ENCODE measurements at regions of chr15 and their contacts with region 1.

Region 1: DNA sequence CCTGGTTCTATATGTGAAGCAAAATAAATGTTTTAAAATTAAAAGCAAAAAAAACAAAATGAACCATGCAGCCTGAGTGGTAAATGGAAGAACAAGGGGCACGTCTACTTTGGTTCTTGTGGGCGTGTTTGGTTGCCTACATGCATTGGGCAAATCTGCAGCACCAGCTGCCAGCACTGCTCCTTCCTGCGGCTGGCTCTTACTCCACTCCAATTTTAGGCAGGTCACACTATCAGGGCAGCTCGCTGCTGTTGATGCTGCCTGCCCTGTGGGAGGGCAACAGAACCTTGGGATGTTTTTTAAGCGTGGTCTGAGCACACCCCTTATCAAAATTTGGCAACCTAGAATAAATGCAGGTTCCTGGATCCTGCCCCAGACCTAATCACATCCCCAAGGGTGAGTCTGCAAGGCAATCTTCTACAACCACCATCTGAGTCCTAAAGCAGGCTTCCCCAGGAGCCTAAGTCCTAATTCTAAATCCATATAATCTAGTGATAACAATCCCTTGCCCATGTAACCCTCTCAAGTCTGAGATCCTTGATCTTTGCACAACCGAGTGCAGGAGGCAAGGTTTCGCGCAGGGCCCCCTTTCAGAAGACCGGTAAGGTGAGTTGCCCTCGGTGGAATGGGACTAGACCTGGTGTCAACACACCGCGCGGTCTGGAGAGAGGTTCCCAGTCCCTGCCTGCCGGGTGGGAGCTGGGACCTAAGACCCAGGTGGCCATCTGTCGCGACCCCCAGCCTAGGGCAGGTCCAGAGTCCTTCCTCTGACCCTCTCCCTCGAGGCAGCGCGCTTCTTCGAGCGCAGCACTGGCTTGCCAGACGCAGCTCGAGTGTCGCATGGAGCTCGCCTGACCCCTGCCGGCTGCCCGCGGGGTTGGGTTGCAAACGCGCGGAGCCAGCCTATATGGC is 15.9 kb downstream of the IVD start:
- DNase-seq: peak; percentile 60 to 87 (median 79)
- ATAC-seq: peak; percentile 98
- H3K4me3 ChIP-seq: no peak overlapping the region
- H3K4me3 Mint-ChIP-seq: no peak overlapping the region
- H3K27ac ChIP-seq: no peak overlapping the region
- H3K27ac Mint-ChIP-seq: no peak overlapping the region
- H3K4me1 ChIP-seq: peaks cover 7% of the 10 kb centered on the region
- H3K4me1 Mint-ChIP-seq: peaks cover 7% of the 10 kb centered on the region
- H3K27me3 ChIP-seq: no peaks in the 10 kb centered on the region
- H3K27me3 Mint-ChIP-seq: no peaks in the 10 kb centered on the region
- CTCF ChIP-seq: peak; percentile 96

Region 2: DNA sequence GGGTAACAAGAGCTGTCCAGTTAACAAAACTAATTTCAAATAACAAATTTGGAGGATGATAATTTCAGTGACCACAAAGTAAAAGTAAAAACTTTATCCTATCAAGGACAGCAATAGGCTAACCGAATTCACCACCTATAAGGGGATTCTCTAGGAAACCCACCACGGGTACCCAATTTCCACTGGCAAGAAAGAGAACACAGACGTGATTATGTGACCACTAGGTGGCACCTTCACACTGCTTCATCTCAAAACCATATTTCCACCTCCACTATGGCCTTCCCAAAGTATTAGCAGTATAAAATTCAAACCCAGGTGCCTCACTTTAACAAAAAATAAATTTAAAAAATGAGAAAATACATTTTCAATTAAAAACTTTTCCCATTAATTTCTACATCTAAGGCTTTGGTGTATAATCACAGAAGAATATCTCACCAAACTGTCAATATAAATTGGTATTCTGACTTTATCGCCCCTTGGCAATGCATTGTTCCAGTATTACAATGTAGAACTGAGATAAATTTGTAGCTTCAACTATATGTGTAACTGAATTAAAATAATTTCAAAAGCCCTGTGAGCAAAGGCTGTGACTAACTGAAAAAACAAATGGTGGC is 735.4 kb before region 1 on chr15:
- CTCF ChIA-PET with region 1: no interaction called
- POLR2A ChIA-PET with region 1: no interaction called
- intact Hi-C with region 1: loop called (anchors 5 to 10 kb)
- DNase-seq: peak in 9 of 14 experiments; percentile 3 to 70 (median 12)
- ATAC-seq: no peak
- H3K4me3 ChIP-seq: no peak overlapping the region
- H3K4me3 Mint-ChIP-seq: no peak overlapping the region
- H3K27ac ChIP-seq: no peak overlapping the region
- H3K27ac Mint-ChIP-seq: no peak overlapping the region
- H3K4me1 ChIP-seq: no peaks in the 10 kb centered on the region
- H3K4me1 Mint-ChIP-seq: no peaks in the 10 kb centered on the region
- H3K27me3 ChIP-seq: no peaks in the 10 kb centered on the region
- H3K27me3 Mint-ChIP-seq: no peaks in the 10 kb centered on the region
- CTCF ChIP-seq: peak; percentile 94

Region 3: DNA sequence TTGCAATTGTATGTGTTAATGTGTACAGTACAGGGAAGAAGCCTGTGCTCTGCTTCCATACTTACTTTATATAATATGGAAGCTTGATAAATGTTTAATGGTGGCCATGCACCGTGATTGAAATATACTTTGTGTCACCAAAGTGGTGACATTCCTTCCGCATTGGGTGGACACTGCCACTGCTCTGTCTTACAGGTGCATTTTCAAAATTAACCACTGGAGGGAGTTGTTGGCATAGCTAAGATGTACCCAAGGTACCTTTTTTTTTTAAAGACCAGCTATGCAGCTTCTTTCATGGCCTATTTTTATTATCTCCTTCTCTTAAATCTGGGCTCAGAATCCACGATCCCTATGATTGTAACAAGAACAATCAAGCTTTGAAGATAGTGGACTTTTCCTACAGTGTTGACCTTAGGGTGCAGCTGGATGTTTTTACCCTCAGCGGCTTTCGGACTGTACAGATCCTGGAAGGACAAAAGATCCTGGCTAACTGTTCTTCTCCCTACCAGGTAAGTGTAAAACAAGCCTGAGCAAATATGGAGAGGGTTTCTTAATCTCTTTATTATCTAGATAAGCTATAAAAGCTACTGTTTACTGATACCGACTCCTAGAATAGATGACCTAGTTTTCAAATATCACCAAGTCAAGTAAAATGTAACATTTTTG is 204.2 kb before region 1 on chr15:
- CTCF ChIA-PET with region 1: interaction called, 3 read pairs
- POLR2A ChIA-PET with region 1: no interaction called
- intact Hi-C with region 1: loop called in 1 of 2 experiments (anchors 10 kb)
- DNase-seq: peak in 11 of 14 experiments; percentile 9 to 85 (median 31)
- ATAC-seq: peak; percentile 99
- H3K4me3 ChIP-seq: no peak overlapping the region
- H3K4me3 Mint-ChIP-seq: no peak overlapping the region
- H3K27ac ChIP-seq: no peak overlapping the region
- H3K27ac Mint-ChIP-seq: no peak overlapping the region
- H3K4me1 ChIP-seq: no peaks in the 10 kb centered on the region
- H3K4me1 Mint-ChIP-seq: no peaks in the 10 kb centered on the region
- H3K27me3 ChIP-seq: no peaks in the 10 kb centered on the region
- H3K27me3 Mint-ChIP-seq: no peaks in the 10 kb centered on the region
- CTCF ChIP-seq: peak; percentile 90

Region 4: GRCh38 chr15:40307421-40308211 is 113.9 kb before region 1 on chr15 and contains the start of gene PLCB2:
- CTCF ChIA-PET with region 1: interaction called, 12 read pairs
- POLR2A ChIA-PET with region 1: no interaction called
- intact Hi-C with region 1: no loop called
- DNase-seq: peak; percentile 49 to 87 (median 68)
- ATAC-seq: peak; percentile 82
- H3K4me3 ChIP-seq: peak within 1 kb of the TSS; percentile 98
- H3K4me3 Mint-ChIP-seq: peak within 1 kb of the TSS; percentile 96
- H3K27ac ChIP-seq: peak within 1 kb of the TSS; percentile 74 to 79
- H3K27ac Mint-ChIP-seq: peak within 1 kb of the TSS; percentile 95
- H3K4me1 ChIP-seq: peaks cover 49% of the 10 kb centered on the region
- H3K4me1 Mint-ChIP-seq: peaks cover 52% of the 10 kb centered on the region
- H3K27me3 ChIP-seq: no peaks in the 10 kb centered on the region
- H3K27me3 Mint-ChIP-seq: no peaks in the 10 kb centered on the region
- CTCF ChIP-seq: peak; percentile 44
- total RNA-seq, gene PLCB2: 206 to 222 TPM

Region 5: DNA sequence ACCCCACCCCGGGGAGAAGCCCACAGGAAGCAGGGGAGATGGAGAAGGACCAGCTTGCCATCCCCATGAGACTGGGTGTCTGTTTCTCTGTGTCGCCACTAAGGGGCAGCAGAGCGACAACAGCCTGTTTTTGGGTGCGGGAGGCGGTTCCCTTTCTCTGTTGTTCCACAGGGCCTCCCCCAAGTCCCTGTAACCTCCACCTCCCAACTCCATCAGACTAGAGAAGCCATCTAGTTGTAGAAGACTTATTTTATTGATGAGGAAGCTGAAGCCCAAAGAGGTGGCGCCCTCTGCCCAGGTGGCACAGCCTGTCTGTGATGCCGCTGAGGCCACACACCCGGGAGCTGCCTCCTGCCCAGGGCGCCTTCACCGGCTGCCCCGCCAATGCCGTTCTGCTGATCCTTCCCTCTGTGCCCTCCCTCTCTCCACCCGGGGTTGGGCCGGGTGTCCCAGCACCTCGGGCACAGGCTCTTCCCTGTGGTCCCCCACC is 76.8 kb before region 1 on chr15:
- CTCF ChIA-PET with region 1: interaction called, 57 read pairs
- POLR2A ChIA-PET with region 1: interaction called, 8 read pairs
- intact Hi-C with region 1: loop called (anchors 1 kb)
- DNase-seq: peak; percentile 46 to 83 (median 62)
- ATAC-seq: peak; percentile 97
- H3K4me3 ChIP-seq: no peak overlapping the region
- H3K4me3 Mint-ChIP-seq: no peak overlapping the region
- H3K27ac ChIP-seq: no peak overlapping the region
- H3K27ac Mint-ChIP-seq: no peak overlapping the region
- H3K4me1 ChIP-seq: peaks cover 11% of the 10 kb centered on the region
- H3K4me1 Mint-ChIP-seq: no peaks in the 10 kb centered on the region
- H3K27me3 ChIP-seq: no peaks in the 10 kb centered on the region
- H3K27me3 Mint-ChIP-seq: no peaks in the 10 kb centered on the region
- CTCF ChIP-seq: peak; percentile 81

Region 6: GRCh38 chr15:40367686-40368611 is 53.6 kb before region 1 on chr15:
- CTCF ChIA-PET with region 1: interaction called, 18 read pairs
- POLR2A ChIA-PET with region 1: no interaction called
- intact Hi-C with region 1: loop called (anchors 1 to 2 kb)
- DNase-seq: peak; percentile 74 to 97 (median 83)
- ATAC-seq: peak; percentile 98
- H3K4me3 ChIP-seq: peak overlapping the region; percentile 69
- H3K4me3 Mint-ChIP-seq: peak overlapping the region; percentile 81
- H3K27ac ChIP-seq: peak overlapping the region in 1 of 2 donors; percentile 1
- H3K27ac Mint-ChIP-seq: peak overlapping the region; percentile 64
- H3K4me1 ChIP-seq: peaks cover 33% of the 10 kb centered on the region
- H3K4me1 Mint-ChIP-seq: peaks cover 17% of the 10 kb centered on the region
- H3K27me3 ChIP-seq: no peaks in the 10 kb centered on the region
- H3K27me3 Mint-ChIP-seq: no peaks in the 10 kb centered on the region
- CTCF ChIP-seq: peak; percentile 88

Region 7: GRCh38 chr15:41043276-41043951 is 621.9 kb after region 1 on chr15:
- CTCF ChIA-PET with region 1: no interaction called
- POLR2A ChIA-PET with region 1: no interaction called
- intact Hi-C with region 1: no loop called
- DNase-seq: no peak
- ATAC-seq: no peak
- H3K4me3 ChIP-seq: no peak overlapping the region
- H3K4me3 Mint-ChIP-seq: no peak overlapping the region
- H3K27ac ChIP-seq: no peak overlapping the region
- H3K27ac Mint-ChIP-seq: no peak overlapping the region
- H3K4me1 ChIP-seq: no peaks in the 10 kb centered on the region
- H3K4me1 Mint-ChIP-seq: no peaks in the 10 kb centered on the region
- H3K27me3 ChIP-seq: no peaks in the 10 kb centered on the region
- H3K27me3 Mint-ChIP-seq: no peaks in the 10 kb centered on the region
- CTCF ChIP-seq: no peak